Sciatic nerve (tissue), 2 donors: ENCODE measurements at regions of chr2 and their contacts with region 1.

Region 1: GRCh38 chr2:103445347-103445746 is 683.5 kb downstream of the TMEM182 start:
- DNase-seq: no peak
- ATAC-seq: no peak

Region 2: DNA sequence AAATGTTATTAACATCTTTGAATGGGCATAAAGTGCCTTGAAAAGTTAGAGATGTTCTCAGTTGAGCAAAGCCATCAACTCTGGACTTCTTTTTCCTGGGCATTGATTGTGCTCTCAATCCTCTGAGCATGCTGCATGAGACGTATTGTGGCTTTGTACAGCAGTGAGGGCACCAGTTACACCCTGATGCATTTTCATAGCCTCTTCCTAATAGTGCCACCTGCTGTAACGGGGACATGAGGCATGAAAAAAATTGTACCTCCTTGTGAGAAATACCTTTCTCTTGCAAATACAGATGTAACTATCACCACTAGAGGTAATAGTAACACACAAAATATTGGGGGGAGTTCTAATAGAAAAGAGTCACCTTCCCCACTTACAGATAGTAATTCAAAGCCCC is 13.9 kb after region 1 on chr2:
- intact Hi-C with region 1: no loop called
- DNase-seq: no peak
- ATAC-seq: no peak

Region 3: DNA sequence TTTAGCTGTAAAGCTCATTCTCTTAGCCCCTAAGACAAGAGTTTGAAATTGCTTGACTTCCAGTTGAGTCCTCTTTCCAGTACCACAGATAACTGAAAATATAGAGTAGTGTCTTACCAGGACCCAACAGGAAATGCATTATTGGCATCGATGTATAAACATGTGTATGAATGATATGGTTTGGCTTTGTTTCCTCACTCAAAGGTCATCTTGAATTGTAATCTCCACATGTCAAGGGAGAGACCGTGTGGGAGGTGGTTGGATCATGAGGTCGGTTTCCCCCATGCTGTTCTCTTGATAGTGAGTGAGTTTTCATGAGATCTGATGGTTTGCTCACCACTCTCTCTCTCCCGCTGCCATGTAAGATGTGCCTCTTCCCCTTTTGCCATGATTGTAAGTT is 61.5 kb after region 1 on chr2:
- intact Hi-C with region 1: loop called (anchors 2 kb)
- DNase-seq: no peak
- ATAC-seq: no peak

Region 4: DNA sequence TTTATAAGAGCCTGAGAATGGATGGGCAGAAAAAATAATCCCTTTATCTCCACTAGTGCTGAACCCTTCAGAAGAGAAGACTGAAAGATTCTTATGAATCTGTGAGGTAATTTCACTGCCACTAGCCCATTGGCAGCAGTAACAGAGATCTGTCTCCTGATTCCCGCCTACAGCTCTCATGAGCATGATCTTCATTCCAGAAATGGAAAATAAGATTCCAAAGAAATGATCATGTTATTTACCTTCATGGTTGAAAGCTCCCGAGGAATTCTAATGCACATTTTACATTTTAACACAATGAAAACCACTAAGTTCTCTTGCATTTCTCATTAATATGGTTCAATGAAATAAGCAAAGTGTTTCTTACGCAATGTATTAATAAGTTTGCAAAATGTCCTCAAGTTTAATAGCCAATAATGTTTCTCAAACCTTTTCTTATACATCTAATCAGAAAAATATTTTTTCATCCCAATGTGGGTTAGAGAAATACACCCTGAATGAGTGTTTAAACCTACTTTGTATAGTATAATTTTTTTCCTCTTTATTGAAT is 222.1 kb after region 1 on chr2:
- intact Hi-C with region 1: no loop called
- DNase-seq: no peak
- ATAC-seq: no peak